ENCODE measurements at regions of chr19 and their contacts with region 1.

Region 1: DNA sequence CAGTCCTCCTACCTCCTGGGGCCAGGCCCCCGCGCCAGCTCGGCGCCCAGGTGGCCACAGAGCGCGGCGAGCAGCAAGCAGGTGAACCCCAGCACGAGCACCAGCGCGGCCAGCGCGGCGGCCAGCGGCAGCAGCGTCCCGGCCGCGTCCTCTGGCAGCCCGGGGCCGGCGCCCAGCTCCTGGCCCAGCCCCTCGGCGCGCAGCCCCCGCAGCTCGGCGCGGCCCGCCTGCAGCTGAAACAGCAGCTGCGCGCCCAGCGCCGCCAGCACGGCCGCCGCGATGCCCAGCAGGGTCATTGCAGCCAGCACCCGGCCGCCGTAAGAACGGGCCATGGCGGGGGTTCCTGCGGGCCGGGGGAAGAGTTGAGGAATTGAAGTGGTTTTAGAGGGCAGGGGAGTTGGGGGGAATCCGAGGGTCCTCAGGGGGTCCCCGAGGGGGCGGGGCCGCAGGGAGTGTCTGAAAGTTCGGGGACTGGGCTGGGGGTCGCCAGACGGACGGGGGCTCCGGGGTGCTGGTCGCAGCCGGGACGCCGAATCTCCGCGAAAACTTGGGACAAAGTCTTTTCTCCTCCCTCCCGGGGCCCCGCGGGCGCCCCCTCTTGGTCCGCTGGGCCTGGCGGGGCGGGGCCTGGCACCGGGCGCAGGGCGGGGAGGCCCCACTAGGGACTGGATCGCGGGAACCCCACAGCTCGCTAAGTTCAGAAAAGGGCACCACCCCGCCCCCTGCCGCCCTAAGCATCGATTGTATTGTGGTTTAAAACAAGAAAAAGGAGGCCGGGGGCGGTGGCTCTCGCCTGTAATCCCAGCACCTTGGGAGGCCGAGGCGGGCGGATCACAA is at the start of gene TMEM221:
- DNase-seq: peak; percentile 35 to 77 (median 53)
- ATAC-seq: peak in 3 of 4 donors; percentile 66 to 80 (median 66)
- H3K4me3 ChIP-seq: peak within 1 kb of the TSS; percentile 22 to 61 (median 53)
- H3K27ac ChIP-seq: peak within 1 kb of the TSS in 1 of 12 donors; percentile 25
- H3K4me1 ChIP-seq: peaks cover 0 to 13% (median 7%) of the 10 kb centered on the region in 12 donors
- H3K27me3 ChIP-seq: peaks cover 0 to 14% (median 0%) of the 10 kb centered on the region in 9 donors
- CTCF ChIP-seq: peak; percentile 29 to 74 (median 58)
- POLR2A ChIP-seq: no peak
- total RNA-seq, gene TMEM221: 0.52 TPM in 1 of 9 donors, not detected in the others

Region 2: GRCh38 chr19:17570791-17571190 is 122.4 kb after region 1 on chr19:
- intact Hi-C with region 1: loop called in 4 of 10 experiments (anchors 5 to 10 kb)
- DNase-seq: no peak
- ATAC-seq: no peak
- H3K4me3 ChIP-seq: no peak overlapping the region
- H3K27ac ChIP-seq: no peak overlapping the region
- H3K4me1 ChIP-seq: peaks cover 0 to 5% (median 3%) of the 10 kb centered on the region in 12 donors
- H3K27me3 ChIP-seq: no peaks in the 10 kb centered on the region
- CTCF ChIP-seq: no peak
- POLR2A ChIP-seq: no peak

Region 3: DNA sequence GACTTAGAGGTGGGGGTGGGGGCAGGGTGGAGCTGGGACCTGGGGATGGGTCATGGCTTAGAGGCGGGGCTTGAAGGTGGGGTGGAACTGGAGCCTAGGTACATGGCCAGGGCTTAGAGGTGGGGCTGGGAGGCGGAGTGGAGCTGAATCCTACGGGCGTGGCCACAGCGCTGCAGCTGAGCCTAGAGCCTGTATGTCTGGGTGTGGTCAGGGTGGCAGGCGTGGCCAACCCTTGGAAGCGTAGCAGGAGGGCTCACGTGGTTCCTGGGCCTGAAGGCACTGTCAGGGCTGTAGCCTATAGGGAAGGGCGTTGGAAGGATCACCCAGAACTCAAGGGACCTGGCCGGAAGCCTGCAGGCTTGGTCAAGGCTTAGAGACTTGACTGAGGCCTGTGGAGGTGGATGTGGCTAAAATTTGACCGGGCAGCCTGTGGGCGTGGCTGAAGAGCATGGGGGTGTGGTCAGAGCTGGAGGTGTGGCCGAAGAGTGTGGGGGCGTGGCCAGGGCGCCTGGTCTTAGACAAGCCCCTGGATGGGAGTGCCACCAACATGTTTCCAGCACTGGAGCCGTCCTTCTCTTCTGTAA is 131.4 kb after region 1 on chr19:
- intact Hi-C with region 1: loop called in 4 of 10 experiments (anchors 5 to 10 kb)
- DNase-seq: peak in 4 of 5 donors; percentile 40 to 63 (median 46)
- ATAC-seq: peak; percentile 62 to 80 (median 76)
- H3K4me3 ChIP-seq: no peak overlapping the region
- H3K27ac ChIP-seq: no peak overlapping the region
- H3K4me1 ChIP-seq: no peaks in the 10 kb centered on the region
- H3K27me3 ChIP-seq: no peaks in the 10 kb centered on the region
- CTCF ChIP-seq: no peak
- POLR2A ChIP-seq: peak in 1 of 2 donors; percentile 16

Region 4: DNA sequence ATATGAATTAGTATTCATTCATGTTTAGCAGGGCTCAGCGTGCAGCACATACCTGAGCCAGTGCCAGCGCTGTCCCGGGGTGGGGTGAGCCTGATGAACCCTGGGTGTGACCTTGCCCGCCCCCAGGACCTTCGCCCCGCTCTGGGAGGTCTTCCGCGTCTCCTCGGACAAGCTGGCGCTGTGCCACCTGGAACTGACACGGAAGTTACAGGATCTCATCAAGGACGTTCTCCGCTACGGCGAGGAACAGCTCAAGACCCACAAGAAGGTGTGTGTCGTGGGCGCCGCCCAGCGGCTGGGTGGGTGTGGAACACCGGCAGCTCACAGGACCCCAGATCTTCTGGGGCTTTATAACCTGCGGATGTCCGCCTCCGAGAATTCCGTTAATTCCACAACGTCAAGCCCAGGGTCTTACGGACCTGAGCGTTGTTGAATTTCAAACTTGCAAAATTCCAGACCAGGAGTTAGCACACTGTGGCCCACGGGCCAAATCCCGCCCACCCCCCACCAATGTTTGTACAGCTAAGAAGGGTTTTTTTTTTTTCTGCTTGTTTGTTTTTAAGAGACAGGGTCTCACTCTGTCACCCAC is 318.3 kb after region 1 on chr19:
- intact Hi-C with region 1: loop called in 3 of 10 experiments (anchors 10 kb)
- DNase-seq: peak; percentile 71 to 91 (median 80)
- ATAC-seq: peak; percentile 32 to 92 (median 85)
- H3K4me3 ChIP-seq: peak overlapping the region in 5 of 12 donors; percentile 7 to 30 (median 25)
- H3K27ac ChIP-seq: no peak overlapping the region
- H3K4me1 ChIP-seq: peaks cover 0 to 13% (median 6%) of the 10 kb centered on the region in 12 donors
- H3K27me3 ChIP-seq: no peaks in the 10 kb centered on the region
- CTCF ChIP-seq: peak; percentile 77 to 90 (median 79)
- POLR2A ChIP-seq: no peak

Region 5: GRCh38 chr19:17775245-17775916 is 327.0 kb after region 1 on chr19:
- intact Hi-C with region 1: loop called in 6 of 10 experiments (anchors 10 kb)
- DNase-seq: no peak
- ATAC-seq: no peak
- H3K4me3 ChIP-seq: no peak overlapping the region
- H3K27ac ChIP-seq: no peak overlapping the region
- H3K4me1 ChIP-seq: peaks cover 0 to 9% (median 0%) of the 10 kb centered on the region in 12 donors
- H3K27me3 ChIP-seq: peaks cover 0 to 56% (median 21%) of the 10 kb centered on the region in 9 donors
- CTCF ChIP-seq: peak in 7 of 12 donors; percentile 17 to 49 (median 43)
- POLR2A ChIP-seq: no peak

Region 6: GRCh38 chr19:17784201-17785008 is 336.1 kb after region 1 on chr19:
- intact Hi-C with region 1: loop called in 6 of 10 experiments (anchors 10 kb)
- DNase-seq: peak; percentile 39 to 73 (median 58)
- ATAC-seq: peak in 3 of 4 donors; percentile 34 to 70 (median 67)
- H3K4me3 ChIP-seq: no peak overlapping the region
- H3K27ac ChIP-seq: no peak overlapping the region
- H3K4me1 ChIP-seq: peaks cover 0 to 5% (median 0%) of the 10 kb centered on the region in 12 donors
- H3K27me3 ChIP-seq: peaks cover 0 to 32% (median 13%) of the 10 kb centered on the region in 9 donors
- CTCF ChIP-seq: peak; percentile 65 to 82 (median 76)
- POLR2A ChIP-seq: no peak